Activated CD4-positive, alpha-beta memory T cell treated with anti-CD3 and anti-CD28 coated beads for 36 hours (primary cell): ENCODE measurements at regions of chr4 and their contacts with region 1.

Region 1: GRCh38 chr4:104896660-104897645 is 249.7 kb upstream of the TET2 start:
- DNase-seq: no peak
- H3K4me3 Mint-ChIP-seq: no peak overlapping the region
- H3K27ac Mint-ChIP-seq: no peak overlapping the region
- H3K4me1 Mint-ChIP-seq: peaks cover 7% of the 10 kb centered on the region
- H3K27me3 Mint-ChIP-seq: no peaks in the 10 kb centered on the region

Region 2: GRCh38 chr4:104693599-104694201 is 203.3 kb before region 1 on chr4:
- CTCF ChIA-PET with region 1: no interaction called
- POLR2A ChIA-PET with region 1: no interaction called
- intact Hi-C with region 1: no loop called
- DNase-seq: no peak
- H3K4me3 Mint-ChIP-seq: no peak overlapping the region
- H3K27ac Mint-ChIP-seq: no peak overlapping the region
- H3K4me1 Mint-ChIP-seq: no peaks in the 10 kb centered on the region
- H3K27me3 Mint-ChIP-seq: peaks cover 1% of the 10 kb centered on the region

Region 3: GRCh38 chr4:104879367-104879766 is 17.6 kb before region 1 on chr4:
- CTCF ChIA-PET with region 1: no interaction called
- POLR2A ChIA-PET with region 1: no interaction called
- intact Hi-C with region 1: no loop called
- DNase-seq: no peak
- H3K4me3 Mint-ChIP-seq: no peak overlapping the region
- H3K27ac Mint-ChIP-seq: no peak overlapping the region
- H3K4me1 Mint-ChIP-seq: peaks cover 7% of the 10 kb centered on the region
- H3K27me3 Mint-ChIP-seq: peaks cover 5% of the 10 kb centered on the region

Region 4: GRCh38 chr4:104930298-104930697 is 33.3 kb after region 1 on chr4:
- CTCF ChIA-PET with region 1: no interaction called
- POLR2A ChIA-PET with region 1: no interaction called
- intact Hi-C with region 1: loop called (anchors 5 kb)
- DNase-seq: no peak
- H3K4me3 Mint-ChIP-seq: no peak overlapping the region
- H3K27ac Mint-ChIP-seq: no peak overlapping the region
- H3K4me1 Mint-ChIP-seq: peaks cover 30% of the 10 kb centered on the region
- H3K27me3 Mint-ChIP-seq: no peaks in the 10 kb centered on the region

Region 5: DNA sequence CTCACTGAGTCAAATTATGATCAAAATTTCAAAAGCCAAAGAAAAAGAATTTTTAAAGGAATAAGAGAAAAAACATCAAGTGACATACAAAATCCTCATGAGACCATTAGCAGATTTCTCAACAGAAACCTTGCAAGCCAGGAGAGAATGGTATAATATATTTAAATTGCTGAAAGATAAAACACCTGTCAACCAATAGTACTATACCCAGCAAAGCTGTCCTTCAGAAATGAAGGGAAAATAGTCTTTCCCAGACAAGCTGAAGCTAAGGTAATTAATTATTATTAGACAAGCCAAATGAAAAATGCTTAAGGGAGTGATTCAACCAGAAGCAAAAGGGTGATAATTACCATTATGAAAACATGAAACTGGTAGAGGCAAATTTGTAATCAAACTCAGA is 145.5 kb after region 1 on chr4:
- CTCF ChIA-PET with region 1: no interaction called
- POLR2A ChIA-PET with region 1: no interaction called
- intact Hi-C with region 1: no loop called
- DNase-seq: no peak
- H3K4me3 Mint-ChIP-seq: no peak overlapping the region
- H3K27ac Mint-ChIP-seq: no peak overlapping the region
- H3K4me1 Mint-ChIP-seq: no peaks in the 10 kb centered on the region
- H3K27me3 Mint-ChIP-seq: peaks cover 2% of the 10 kb centered on the region